Activated naive CD4-positive, alpha-beta T cell treated with anti-CD3 and anti-CD28 coated beads for 36 hours (primary cell): ENCODE measurements at regions of chr2 and their contacts with region 1.

Region 1: GRCh38 chr2:47906157-47907038 is at the start of gene FBXO11:
- DNase-seq: peak; percentile 97
- H3K4me3 Mint-ChIP-seq: peak within 1 kb of the TSS; percentile 87
- H3K27ac Mint-ChIP-seq: peak within 1 kb of the TSS; percentile 96
- H3K4me1 Mint-ChIP-seq: peaks cover 29% of the 10 kb centered on the region
- H3K27me3 Mint-ChIP-seq: no peaks in the 10 kb centered on the region
- total RNA-seq, gene FBXO11: 32.8 to 35.0 TPM

Region 2: GRCh38 chr2:47402805-47403608 is 503.4 kb before region 1 on chr2 and contains the start of gene MSH2:
- CTCF ChIA-PET with region 1: no interaction called
- intact Hi-C with region 1: loop called (anchors 1 kb)
- DNase-seq: peak; percentile 95
- H3K4me3 Mint-ChIP-seq: peak within 1 kb of the TSS; percentile 90
- H3K27ac Mint-ChIP-seq: peak within 1 kb of the TSS; percentile 97
- H3K4me1 Mint-ChIP-seq: peaks cover 40% of the 10 kb centered on the region
- H3K27me3 Mint-ChIP-seq: no peaks in the 10 kb centered on the region
- total RNA-seq, gene MSH2: 42.7 to 43.3 TPM

Region 3: DNA sequence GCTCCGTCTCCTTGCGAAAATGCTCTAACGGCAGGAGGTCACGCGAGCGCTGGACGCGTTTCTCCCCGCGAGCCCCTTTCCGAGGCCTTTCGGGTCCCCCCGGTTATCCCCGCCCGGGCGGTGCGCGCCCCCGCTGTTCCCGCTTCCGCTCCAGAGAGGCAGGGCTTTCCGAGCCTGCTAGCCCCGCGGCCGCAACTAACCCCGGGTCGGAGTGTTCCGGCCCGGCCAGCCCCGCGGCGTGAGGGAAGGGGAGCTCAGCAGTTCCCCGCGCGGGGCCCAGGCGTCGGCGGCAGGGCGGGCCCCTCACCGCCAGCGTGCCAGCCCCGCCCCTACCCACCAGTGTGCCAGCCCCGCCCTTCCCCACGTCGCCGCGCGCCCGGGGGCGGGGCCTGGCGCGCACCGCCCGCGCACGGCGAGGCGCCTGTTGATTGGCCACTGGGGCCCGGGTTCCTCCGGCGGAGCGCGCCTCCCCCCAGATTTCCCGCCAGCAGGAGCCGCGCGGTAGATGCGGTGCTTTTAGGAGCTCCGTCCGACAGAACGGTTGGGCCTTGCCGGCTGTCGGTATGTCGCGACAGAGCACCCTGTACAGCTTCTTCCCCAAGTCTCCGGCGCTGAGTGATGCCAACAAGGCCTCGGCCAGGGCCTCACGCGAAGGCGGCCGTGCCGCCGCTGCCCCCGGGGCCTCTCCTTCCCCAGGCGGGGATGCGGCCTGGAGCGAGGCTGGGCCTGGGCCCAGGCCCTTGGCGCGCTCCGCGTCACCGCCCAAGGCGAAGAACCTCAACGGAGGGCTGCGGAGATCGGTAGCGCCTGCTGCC is 123.5 kb before region 1 on chr2 and contains the start of gene MSH6:
- CTCF ChIA-PET with region 1: no interaction called
- intact Hi-C with region 1: loop called (anchors 1 kb)
- DNase-seq: peak; percentile 87
- H3K4me3 Mint-ChIP-seq: peak within 1 kb of the TSS; percentile 91
- H3K27ac Mint-ChIP-seq: peak within 1 kb of the TSS; percentile 84
- H3K4me1 Mint-ChIP-seq: peaks cover 32% of the 10 kb centered on the region
- H3K27me3 Mint-ChIP-seq: no peaks in the 10 kb centered on the region
- total RNA-seq, gene MSH6: 127 to 128 TPM

Region 4: GRCh38 chr2:47888581-47889280 is 17.7 kb before region 1 on chr2:
- CTCF ChIA-PET with region 1: no interaction called
- intact Hi-C with region 1: loop called (anchors 2 kb)
- DNase-seq: no peak
- H3K4me3 Mint-ChIP-seq: no peak overlapping the region
- H3K27ac Mint-ChIP-seq: peak overlapping the region; percentile 3
- H3K4me1 Mint-ChIP-seq: peaks cover 68% of the 10 kb centered on the region
- H3K27me3 Mint-ChIP-seq: no peaks in the 10 kb centered on the region

Region 5: DNA sequence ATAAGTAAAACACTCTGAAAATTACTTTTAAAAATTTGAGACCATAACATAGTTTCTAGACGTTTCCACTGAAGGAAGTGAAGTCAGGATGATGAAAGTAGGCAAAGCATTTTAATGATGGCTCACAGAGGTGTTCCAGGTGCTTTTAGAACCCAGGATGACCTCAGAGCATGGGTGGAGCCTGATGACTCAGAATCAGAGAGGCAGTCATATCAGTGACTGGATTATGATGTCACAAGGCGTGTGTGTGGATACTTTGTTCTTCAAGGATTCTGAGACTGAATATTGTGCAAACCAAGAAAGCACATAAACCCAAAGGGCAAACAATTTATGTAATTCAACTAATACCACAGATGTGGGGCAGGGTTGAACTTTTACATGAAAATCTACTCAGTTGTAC is 207.9 kb after region 1 on chr2:
- CTCF ChIA-PET with region 1: no interaction called
- intact Hi-C with region 1: loop called (anchors 2 kb)
- DNase-seq: peak; percentile 88
- H3K4me3 Mint-ChIP-seq: no peak overlapping the region
- H3K27ac Mint-ChIP-seq: no peak overlapping the region
- H3K4me1 Mint-ChIP-seq: peaks cover 29% of the 10 kb centered on the region
- H3K27me3 Mint-ChIP-seq: no peaks in the 10 kb centered on the region

Region 6: GRCh38 chr2:48420512-48421197 is 514.3 kb after region 1 on chr2:
- CTCF ChIA-PET with region 1: no interaction called
- intact Hi-C with region 1: loop called (anchors 1 kb)
- DNase-seq: peak; percentile 97
- H3K4me3 Mint-ChIP-seq: no peak overlapping the region
- H3K27ac Mint-ChIP-seq: peak overlapping the region; percentile 7
- H3K4me1 Mint-ChIP-seq: peaks cover 21% of the 10 kb centered on the region
- H3K27me3 Mint-ChIP-seq: no peaks in the 10 kb centered on the region